BJ (cell line): ENCODE measurements at regions of chr7 and their contacts with region 1.

Region 1: GRCh38 chr7:100503345-100503725 is 19.6 kb downstream of the NYAP1 start:
- DNase-seq: no peak
- H3K4me3 ChIP-seq: no peak overlapping the region
- H3K27me3 ChIP-seq: no peaks in the 10 kb centered on the region
- CTCF ChIP-seq: no peak

Region 2: GRCh38 chr7:100396421-100396982 is 106.8 kb before region 1 on chr7:
- CTCF ChIA-PET with region 1: no interaction called
- POLR2A ChIA-PET with region 1: no interaction called
- DNase-seq: no peak
- H3K4me3 ChIP-seq: no peak overlapping the region
- H3K27me3 ChIP-seq: peaks cover 7% of the 10 kb centered on the region
- CTCF ChIP-seq: no peak

Region 3: GRCh38 chr7:100538654-100539435 is 35.5 kb after region 1 on chr7 and contains the start of gene AGFG2:
- CTCF ChIA-PET with region 1: no interaction called
- POLR2A ChIA-PET with region 1: interaction called, 11 read pairs
- DNase-seq: peak; percentile 99
- H3K4me3 ChIP-seq: peak within 1 kb of the TSS; percentile 80
- H3K27me3 ChIP-seq: no peaks in the 10 kb centered on the region
- CTCF ChIP-seq: no peak
- polyA plus RNA-seq, gene AGFG2: 6.3 and 10.9 TPM in 2 replicates